Kidney (tissue), 22 donors: ENCODE measurements at regions of chr12 and their contacts with region 1.

Region 1: DNA sequence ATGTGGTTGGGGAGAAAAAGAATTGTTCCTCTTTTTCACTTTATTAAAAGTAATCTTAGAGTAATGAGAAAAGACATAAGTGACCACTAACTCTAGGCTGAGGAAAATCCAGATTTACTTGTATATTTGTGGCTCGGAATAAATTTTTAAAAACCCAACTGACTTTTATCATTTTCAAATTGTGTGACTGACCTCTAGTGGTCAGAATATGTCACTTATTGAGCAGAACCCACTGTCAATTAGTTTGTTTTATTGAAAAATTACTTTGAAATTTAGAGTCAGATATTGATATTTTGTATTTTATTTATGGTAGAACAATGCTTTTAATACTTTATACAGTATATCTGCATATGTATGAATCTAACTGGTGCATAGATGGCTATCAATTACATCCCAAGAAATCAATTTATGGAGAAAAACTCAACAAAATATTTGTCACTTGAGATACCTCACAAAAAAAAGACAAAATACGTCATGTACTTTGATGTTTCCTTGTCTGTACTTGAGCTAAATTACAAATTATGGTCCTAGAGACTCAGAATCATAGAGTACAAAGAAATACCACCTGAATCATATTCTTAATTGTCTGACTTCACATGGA is 229.4 kb downstream of the CNTN1 start:
- DNase-seq: peak in 2 of 5 donors; percentile 6 to 30
- H3K4me3 ChIP-seq: no peak overlapping the region
- H3K27ac ChIP-seq: no peak overlapping the region
- H3K4me1 ChIP-seq: no peaks in the 10 kb centered on the region
- H3K27me3 ChIP-seq: no peaks in the 10 kb centered on the region
- CTCF ChIP-seq: peak; percentile 68

Region 2: DNA sequence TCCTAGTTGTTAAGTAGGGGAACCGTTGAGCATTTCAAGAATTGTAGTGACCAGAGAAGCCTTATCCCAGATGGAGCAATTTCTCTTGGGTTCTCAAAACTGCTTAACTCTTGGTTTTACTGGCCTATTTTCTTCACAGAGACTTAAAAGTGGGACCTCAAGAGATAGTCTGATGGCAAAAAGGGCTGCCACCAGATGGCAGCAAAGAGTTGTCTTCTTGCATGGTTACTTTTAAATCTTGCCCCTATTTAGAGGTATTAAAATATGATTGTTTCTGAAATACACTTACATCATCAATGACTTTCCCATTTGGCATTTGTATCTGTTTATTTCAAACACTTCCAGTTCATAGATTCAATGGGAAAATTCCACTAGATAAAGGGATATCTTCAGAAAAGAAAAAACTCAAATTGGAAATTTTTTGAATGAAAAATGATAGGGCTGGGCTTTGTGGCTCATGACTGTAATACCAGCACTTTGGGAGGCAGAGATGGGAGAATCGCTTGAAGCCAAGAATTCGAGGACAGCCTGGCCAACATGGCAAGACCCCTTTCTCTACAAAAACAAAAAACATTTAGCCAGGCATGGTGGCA is 299.3 kb before region 1 on chr12:
- intact Hi-C with region 1: loop called (anchors 5 kb)
- DNase-seq: peak; percentile 38 to 77 (median 57)
- H3K4me3 ChIP-seq: no peak overlapping the region
- H3K27ac ChIP-seq: no peak overlapping the region
- H3K4me1 ChIP-seq: no peaks in the 10 kb centered on the region
- H3K27me3 ChIP-seq: no peaks in the 10 kb centered on the region
- CTCF ChIP-seq: peak; percentile 40

Region 3: DNA sequence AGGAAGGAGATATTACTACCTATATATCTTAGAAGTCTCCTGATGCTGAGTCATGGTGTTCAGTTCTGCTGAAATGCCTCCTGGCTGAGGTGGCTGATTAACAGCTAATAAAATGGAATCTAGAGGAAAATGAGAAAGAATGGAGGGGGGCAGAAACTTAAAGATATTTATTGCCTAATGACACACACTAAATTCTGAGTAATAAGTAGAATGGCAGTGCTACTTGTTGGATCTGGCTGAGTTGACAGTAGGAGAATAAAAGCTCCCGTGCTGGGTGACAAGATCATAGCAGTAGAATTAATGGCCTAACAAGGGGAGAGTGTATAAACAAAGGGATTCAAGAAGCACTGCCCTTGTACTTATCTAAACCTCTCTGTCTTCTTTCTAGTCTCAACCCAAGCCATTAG is 91.9 kb before region 1 on chr12:
- intact Hi-C with region 1: no loop called
- DNase-seq: peak in 2 of 5 donors; percentile 53 to 65
- H3K4me3 ChIP-seq: no peak overlapping the region
- H3K27ac ChIP-seq: no peak overlapping the region
- H3K4me1 ChIP-seq: no peaks in the 10 kb centered on the region
- H3K27me3 ChIP-seq: no peaks in the 10 kb centered on the region
- CTCF ChIP-seq: no peak